ENCODE measurements at regions of chr17 and their contacts with region 1.

Region 1: DNA sequence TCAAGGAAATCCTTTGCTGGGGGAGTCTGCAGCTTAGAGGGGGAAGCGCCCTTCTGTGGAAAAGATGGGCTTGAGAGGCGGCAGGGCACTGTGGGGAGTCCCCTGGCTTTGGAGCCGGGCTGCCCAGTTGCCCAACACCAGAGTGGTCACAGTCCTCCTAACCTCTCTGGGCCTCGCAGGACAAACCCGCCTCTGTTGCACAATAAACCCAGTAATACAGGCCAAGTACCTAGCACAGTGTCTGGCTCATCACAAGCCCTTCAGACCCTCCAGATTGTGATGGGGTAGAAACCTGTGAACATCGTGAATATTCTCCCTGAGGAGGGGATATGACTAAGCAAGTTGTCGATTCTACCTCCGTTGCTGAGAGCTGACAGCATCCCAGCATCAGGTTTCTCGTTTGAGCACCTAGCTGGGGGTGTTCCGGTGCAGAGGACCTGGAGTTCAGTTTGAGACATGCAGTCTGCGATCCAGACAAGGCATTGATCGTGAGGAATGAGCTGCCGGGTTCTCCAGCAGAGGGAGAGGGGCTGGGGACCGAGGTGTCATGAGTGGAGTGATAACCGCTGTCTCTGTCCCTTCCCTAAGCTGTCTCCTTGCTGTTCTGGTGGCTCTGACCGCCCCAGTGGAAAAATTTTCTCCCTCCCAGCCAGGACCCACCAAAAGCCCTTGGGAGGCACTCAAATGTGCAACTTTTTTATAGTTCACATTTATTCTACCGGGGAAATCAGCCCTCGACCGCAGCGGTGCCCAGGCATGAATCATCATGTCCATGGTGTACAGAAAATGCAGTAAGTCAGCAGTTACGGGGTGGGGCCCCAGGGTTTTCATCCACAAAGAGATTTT is 161.9 kb downstream of the WSCD1 start:
- DNase-seq: peak; percentile 79
- H3K4me3 ChIP-seq: peak overlapping the region; percentile 8 to 31 (median 25)
- H3K27ac ChIP-seq: peak overlapping the region; percentile 40
- H3K4me1 ChIP-seq: peaks cover 17% of the 10 kb centered on the region
- H3K27me3 ChIP-seq: peaks cover 2% of the 10 kb centered on the region
- CTCF ChIP-seq: peak in 1 of 2 donors; percentile 18

Region 2: DNA sequence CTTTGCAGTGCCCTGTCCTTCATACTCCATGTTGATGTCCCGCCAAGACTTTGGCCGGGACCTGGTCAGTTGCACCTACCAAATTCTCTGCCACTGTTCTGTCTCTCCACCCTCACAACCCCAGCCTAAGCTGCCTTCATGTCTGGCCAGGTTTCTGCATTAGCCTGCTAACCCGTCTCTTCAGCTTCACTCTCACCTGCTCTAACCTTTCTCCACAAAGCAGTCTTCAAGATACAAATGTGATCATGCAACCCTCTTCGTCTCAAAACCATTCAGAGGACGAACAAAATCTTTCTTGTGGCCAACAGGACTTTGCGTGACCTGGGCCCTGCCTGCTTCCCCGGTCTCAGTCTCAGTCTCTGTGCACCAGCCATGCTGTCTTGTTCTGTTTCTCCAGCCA is 13.8 kb before region 1 on chr17:
- CTCF ChIA-PET with region 1: no interaction called
- dilution Hi-C with region 1: no loop called
- in situ Hi-C with region 1: no loop called
- intact Hi-C with region 1: loop called (anchors 1 kb)
- DNase-seq: no peak
- H3K4me3 ChIP-seq: no peak overlapping the region
- H3K27ac ChIP-seq: no peak overlapping the region
- H3K4me1 ChIP-seq: no peaks in the 10 kb centered on the region
- H3K27me3 ChIP-seq: peaks cover 29% of the 10 kb centered on the region
- CTCF ChIP-seq: no peak